ENCODE measurements at regions of chr10 and their contacts with region 1.

Region 1: DNA sequence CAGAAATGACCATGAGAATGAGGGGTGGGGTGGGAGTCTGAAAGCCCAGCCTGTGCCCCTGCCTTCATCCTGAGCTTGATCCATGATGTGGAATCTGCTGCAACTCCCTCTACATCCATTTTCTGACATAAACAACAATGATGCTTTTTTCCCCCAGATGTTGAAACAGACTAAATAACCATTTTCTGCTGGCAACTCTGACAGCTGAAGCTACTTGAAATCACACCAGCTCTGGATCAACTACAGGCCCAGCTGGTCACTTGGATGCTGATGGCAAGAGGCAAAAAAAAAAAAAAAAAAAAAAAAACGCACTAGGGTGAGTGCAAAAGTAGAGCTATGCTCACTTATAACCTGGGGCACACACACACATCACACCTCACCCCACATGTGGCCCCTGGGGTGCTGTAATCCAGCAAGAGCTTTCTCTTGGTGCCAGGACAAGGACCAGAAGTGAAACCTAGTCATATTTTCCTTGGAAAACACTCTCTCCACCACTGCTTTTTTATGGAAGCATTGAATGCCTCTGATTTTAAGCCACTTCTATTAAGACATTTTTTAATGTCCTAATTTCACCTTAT is 74.1 kb downstream of the FAM107B start:
- DNase-seq: no peak
- H3K4me3 ChIP-seq: no peak overlapping the region
- H3K27me3 ChIP-seq: no peaks in the 10 kb centered on the region
- CTCF ChIP-seq: no peak

Region 2: DNA sequence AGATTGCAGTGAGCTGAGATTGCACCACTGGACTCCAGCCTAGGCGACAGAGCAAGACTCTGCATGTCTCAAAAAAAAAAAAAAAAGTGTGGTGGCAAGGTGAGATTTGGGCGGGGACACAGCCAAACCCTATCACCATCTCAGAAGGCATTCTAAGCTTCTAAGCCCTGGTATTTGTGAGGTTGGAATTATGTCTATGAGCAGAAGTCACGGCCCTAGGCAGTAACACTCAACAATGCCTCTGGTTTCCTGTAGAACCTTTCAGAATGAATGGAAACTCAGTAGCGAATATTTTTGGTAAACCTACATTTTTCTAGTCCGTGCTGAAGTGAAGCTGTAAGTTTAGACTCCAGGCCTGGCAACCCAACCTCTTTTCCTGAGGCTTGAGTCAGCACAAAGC is 14.3 kb before region 1 on chr10:
- CTCF ChIA-PET with region 1: interaction called, 3 read pairs
- POLR2A ChIA-PET with region 1: interaction called, 16 read pairs
- DNase-seq: peak; percentile 63
- H3K4me3 ChIP-seq: no peak overlapping the region
- H3K27me3 ChIP-seq: no peaks in the 10 kb centered on the region
- CTCF ChIP-seq: no peak

Region 3: DNA sequence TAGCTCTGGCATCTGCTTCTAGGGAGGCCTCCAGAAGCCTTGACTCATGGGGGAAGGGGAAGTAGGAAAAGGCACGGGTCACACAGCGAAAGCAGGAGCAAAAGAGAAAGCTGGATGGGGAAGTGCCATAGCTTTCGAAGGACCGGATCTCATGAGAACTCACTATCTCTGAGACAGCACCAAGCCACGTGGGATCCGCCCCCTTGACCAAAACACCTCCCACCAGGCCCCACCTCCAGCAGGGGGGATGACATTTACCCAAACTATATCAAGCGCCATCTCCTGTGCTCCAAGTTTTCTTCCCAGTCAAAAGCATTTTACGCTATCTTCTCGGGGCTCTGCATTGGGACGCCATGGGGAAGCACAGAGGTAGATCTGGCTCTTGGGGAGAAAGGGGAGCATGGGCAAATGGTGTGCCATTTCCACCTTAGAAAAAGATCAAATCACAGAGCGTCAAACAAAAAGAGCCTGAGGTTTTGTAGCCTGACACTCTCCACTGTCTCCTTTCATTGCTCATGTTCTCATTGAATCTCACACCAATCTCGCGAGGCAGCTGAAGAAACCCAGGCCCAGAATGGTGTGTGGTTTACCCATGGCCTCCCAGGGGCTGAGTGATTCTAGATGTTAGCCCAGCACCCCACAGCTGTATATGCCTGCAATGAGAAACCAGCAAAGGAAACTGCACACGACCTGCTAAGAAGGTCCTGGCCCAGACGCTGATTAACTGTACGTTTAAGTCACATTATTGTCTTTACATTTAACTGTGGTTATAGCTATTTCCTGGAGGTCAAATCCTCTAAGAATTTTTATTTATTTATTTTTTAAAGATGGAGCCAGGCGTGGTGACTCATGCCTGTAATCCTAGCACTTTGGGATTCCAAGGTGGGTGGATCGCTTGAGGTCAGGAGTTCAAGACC is 335.0 kb after region 1 on chr10:
- CTCF ChIA-PET with region 1: no interaction called
- POLR2A ChIA-PET with region 1: no interaction called
- DNase-seq: no peak
- H3K4me3 ChIP-seq: no peak overlapping the region
- H3K27me3 ChIP-seq: peaks cover 5% of the 10 kb centered on the region
- CTCF ChIP-seq: no peak

Measured in BJ (cell line).